ENCODE measurements at regions of chr12 and their contacts with region 1.

Region 1: GRCh38 chr12:78120866-78121560 is 290.3 kb downstream of the NAV3 start:
- DNase-seq: no peak
- ATAC-seq: 0 out of 3 replicates have a peak, but pooled peaks have one; percentile 36
- H3K4me3 ChIP-seq: no peak overlapping the region
- H3K27ac ChIP-seq: no peak overlapping the region
- H3K4me1 ChIP-seq: no peaks in the 10 kb centered on the region
- H3K27me3 ChIP-seq: no peaks in the 10 kb centered on the region
- CTCF ChIP-seq: peak in 1 of 3 experiments; percentile 9; a peak in 2 of 6 replicates
- EP300 ChIP-seq: no peak
- POLR2A ChIP-seq: no peak
- RAD21 ChIP-seq: peak; percentile 61

Region 2: GRCh38 chr12:77995436-77996167 is 125.4 kb before region 1 on chr12:
- CTCF ChIA-PET with region 1: interaction called, 21 read pairs
- POLR2A ChIA-PET with region 1: no interaction called
- RAD21 ChIA-PET with region 1: interaction called, 11 read pairs
- SMC1A ChIA-PET with region 1: interaction called, 15 read pairs
- in situ Hi-C with region 1: loop called (anchors 5 kb)
- intact Hi-C with region 1: loop called (anchors 1 kb)
- DNase-seq: peak; percentile 32
- ATAC-seq: peak; percentile 86
- H3K4me3 ChIP-seq: no peak overlapping the region
- H3K27ac ChIP-seq: no peak overlapping the region
- H3K4me1 ChIP-seq: peaks cover 4% of the 10 kb centered on the region
- H3K27me3 ChIP-seq: no peaks in the 10 kb centered on the region
- CTCF ChIP-seq: no peak
- EP300 ChIP-seq: peak; percentile 58 to 87; a peak in 2 of 4 replicates
- POLR2A ChIP-seq: no peak
- RAD21 ChIP-seq: no peak

Region 3: DNA sequence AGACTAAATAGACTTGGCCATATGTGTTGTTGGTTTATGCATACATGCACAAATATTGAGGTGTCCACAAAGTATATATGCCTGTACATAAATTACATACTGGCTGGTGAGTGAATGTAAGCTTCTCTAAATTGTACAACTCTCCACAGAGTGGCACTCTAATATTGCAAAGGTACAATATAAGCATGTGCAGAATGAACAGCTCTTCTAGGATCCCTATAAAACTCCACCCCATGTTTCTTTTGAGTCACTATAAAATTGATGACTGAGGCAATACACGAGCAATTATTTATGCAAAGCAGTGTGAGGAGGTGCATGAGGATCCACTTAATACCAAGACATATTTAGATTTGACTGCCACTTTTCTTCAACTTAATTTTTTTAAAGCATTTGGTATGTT is 118.1 kb before region 1 on chr12:
- CTCF ChIA-PET with region 1: interaction called, 24 read pairs
- POLR2A ChIA-PET with region 1: no interaction called
- RAD21 ChIA-PET with region 1: interaction called, 11 read pairs
- SMC1A ChIA-PET with region 1: interaction called, 16 read pairs
- in situ Hi-C with region 1: loop called (anchors 5 kb)
- intact Hi-C with region 1: loop called (anchors 1 kb)
- DNase-seq: no peak
- ATAC-seq: no peak
- H3K4me3 ChIP-seq: no peak overlapping the region
- H3K27ac ChIP-seq: no peak overlapping the region
- H3K4me1 ChIP-seq: peaks cover 4% of the 10 kb centered on the region
- H3K27me3 ChIP-seq: no peaks in the 10 kb centered on the region
- CTCF ChIP-seq: no peak; a peak in 1 of 6 replicates
- EP300 ChIP-seq: no peak
- POLR2A ChIP-seq: no peak
- RAD21 ChIP-seq: peak; percentile 36; the same call in 1 of the 2 replicates

Region 4: DNA sequence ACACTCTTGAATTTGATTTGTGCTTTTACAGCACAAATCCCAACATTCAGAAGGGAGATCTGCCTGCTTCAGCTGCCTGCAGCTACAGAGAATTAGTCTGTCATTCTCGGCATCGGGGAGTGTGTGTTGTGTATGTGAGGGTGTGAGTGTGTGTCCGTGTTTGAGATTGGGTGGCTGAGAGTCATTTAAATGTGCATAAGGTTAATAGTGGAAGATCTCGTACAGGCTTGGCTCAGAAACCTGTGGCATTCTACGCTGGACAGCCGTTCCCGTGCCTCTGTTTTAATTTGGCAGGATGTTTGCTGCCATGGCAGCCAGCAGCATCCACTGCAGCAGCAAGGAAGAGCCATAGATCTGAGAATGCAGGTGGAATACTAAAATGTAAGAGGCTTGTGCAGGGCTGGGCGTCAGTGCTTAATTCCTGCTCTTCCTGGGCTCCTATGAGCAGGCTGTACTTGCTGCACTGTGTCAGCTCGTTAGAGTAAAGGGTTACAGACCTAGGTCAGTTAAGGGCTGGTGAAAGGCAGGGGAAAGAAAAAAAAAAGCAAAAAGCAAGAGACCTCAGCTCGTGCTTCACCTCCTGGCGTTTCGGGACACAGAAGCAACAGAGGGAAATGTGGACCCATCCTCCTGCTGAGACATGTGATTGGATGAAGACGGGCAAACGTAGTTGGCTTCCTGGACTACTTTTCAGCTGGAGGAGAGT is 85.0 kb before region 1 on chr12:
- CTCF ChIA-PET with region 1: interaction called, 47 read pairs
- POLR2A ChIA-PET with region 1: no interaction called
- RAD21 ChIA-PET with region 1: interaction called, 24 read pairs
- SMC1A ChIA-PET with region 1: interaction called, 13 read pairs
- in situ Hi-C with region 1: no loop called
- intact Hi-C with region 1: no loop called
- DNase-seq: no peak
- ATAC-seq: no peak; the same call in 1 of the 3 replicates
- H3K4me3 ChIP-seq: no peak overlapping the region
- H3K27ac ChIP-seq: no peak overlapping the region
- H3K4me1 ChIP-seq: no peaks in the 10 kb centered on the region
- H3K27me3 ChIP-seq: no peaks in the 10 kb centered on the region
- CTCF ChIP-seq: no peak
- EP300 ChIP-seq: no peak
- POLR2A ChIP-seq: no peak
- RAD21 ChIP-seq: no peak

Region 5: DNA sequence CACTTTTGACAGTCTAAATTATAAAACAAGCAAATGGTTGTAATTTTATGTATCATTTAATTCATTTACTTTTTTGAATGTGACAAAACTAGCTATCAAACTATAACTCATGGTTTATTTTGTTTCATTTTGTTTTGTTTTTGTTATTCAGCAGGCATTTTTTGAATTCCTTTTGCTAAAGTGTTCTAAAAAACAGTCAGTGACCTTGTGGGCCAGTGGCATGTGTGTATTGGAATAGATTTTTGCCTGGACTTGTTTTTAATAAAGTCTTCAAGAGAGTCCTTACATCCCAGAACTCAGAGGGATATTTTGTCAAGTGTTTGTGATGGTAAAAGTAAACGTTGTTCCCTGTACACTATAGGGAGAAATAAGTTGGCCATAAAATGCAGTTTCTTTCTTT is 373.9 kb after region 1 on chr12:
- CTCF ChIA-PET with region 1: no interaction called
- POLR2A ChIA-PET with region 1: no interaction called
- RAD21 ChIA-PET with region 1: no interaction called
- SMC1A ChIA-PET with region 1: no interaction called
- in situ Hi-C with region 1: no loop called
- intact Hi-C with region 1: no loop called
- DNase-seq: no peak
- ATAC-seq: no peak
- H3K4me3 ChIP-seq: no peak overlapping the region
- H3K27ac ChIP-seq: no peak overlapping the region
- H3K4me1 ChIP-seq: no peaks in the 10 kb centered on the region
- H3K27me3 ChIP-seq: no peaks in the 10 kb centered on the region
- CTCF ChIP-seq: no peak
- EP300 ChIP-seq: no peak
- POLR2A ChIP-seq: no peak
- RAD21 ChIP-seq: no peak

Measured in GM12878 (cell line).